AG04449 (cell line): ENCODE measurements at regions of chr1 and their contacts with region 1.

Region 1: GRCh38 chr1:61851849-61852669 is 109.8 kb downstream of the PATJ start:
- DNase-seq: peak; percentile 17
- H3K4me3 ChIP-seq: no peak overlapping the region
- CTCF ChIP-seq: peak; percentile 45

Region 2: DNA sequence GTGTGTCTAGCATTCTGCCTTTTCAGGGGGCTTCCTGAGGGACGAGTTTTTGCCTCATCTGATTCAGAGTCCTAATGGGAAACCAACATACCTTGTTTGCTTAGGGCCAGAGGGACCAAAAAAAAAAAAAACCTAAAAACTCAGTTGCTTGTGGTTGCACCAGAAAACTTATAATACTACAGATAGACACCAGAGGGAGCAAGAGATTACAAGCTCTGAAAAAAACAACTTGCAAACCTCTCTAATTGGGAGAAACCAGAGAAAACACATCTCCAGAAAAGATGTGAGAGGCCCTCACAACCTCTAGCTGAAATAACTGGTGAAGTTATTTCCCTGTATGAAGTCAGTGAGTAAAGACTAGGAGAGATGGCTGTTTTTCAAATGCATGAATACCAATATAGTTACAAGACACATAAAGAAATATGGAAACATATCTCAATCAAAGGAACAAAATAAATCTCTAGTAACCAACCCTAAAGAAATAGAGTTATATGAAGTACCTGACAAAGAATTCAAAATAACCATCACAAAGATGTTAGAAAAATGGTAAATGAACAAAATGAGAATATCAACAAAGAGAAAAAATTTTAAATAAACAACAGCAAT is 1003.4 kb before region 1 on chr1:
- CTCF ChIA-PET with region 1: interaction called, 18 read pairs
- POLR2A ChIA-PET with region 1: no interaction called
- DNase-seq: no peak
- H3K4me3 ChIP-seq: no peak overlapping the region
- CTCF ChIP-seq: peak; percentile 1

Region 3: DNA sequence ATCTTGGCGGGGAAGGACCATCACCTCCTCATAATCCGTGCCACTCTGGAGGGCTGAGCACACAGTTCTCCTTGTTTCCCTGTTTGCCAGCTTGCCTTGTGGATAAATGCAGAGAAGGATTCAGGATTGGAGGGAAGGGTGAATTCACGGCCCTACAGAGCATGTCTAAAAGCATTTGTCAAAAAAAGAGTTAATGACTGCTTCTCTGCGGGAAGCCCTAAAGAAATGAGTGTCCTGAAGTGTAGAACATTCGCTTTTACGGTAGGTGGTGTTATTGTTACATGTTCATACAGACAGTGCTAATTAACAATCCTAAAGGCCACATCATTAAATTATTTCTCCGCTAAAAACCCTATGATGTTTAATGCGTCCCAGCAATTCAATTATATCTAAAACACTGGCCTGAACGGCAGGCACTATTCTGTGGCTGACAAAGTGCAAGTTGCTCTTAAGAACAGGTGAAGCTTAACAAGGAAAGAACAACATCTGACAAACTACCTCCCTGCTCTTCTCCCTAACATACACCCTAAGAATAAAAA is 882.0 kb before region 1 on chr1:
- CTCF ChIA-PET with region 1: interaction called, 15 read pairs
- POLR2A ChIA-PET with region 1: no interaction called
- DNase-seq: no peak
- H3K4me3 ChIP-seq: no peak overlapping the region
- CTCF ChIP-seq: no peak

Region 4: DNA sequence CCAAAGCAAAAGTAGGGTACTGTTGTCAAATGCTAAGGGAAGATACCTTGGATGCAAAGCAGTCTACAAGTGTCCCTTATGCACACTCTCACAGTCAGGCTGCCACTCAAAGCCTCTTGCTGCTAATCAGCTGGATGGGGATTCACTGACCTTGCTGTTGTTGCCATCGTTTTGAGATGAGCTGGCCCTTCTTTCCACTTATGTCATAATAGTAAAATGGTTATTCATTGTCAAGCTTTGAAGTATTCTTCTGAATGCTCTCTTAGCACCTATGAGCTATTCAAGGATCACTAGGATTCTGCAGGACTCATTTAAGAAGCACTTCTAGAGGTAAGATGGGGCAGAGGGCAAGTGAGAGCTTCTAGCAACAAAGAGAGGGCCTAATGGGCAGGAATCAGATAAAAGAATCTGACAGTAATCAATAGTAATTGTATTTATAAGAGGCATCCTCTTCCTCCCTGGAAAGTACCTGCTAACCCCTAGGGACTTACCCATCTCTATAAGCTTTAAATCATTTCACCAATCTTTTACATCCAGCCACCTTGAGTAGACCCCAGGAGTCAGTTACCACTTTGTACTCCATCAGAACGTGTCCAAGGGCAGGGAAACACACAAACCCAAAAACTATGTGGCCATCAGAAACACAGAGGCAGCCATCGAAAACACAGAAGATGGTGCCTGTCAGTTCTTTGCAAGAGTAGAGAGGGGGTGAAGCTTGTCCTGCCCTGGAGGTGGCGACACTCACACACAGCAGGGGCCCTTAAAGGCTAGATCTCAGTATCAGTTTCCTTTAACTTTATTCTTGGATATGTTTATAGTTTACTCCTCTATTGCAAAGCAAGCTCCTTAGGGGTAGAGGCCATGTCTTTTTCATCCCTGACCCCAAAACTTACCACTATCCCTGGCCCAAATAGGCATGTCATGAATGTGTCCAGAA is 873.4 kb before region 1 on chr1:
- CTCF ChIA-PET with region 1: interaction called, 19 read pairs
- POLR2A ChIA-PET with region 1: no interaction called
- DNase-seq: no peak
- H3K4me3 ChIP-seq: no peak overlapping the region
- CTCF ChIP-seq: peak; percentile 76

Region 5: DNA sequence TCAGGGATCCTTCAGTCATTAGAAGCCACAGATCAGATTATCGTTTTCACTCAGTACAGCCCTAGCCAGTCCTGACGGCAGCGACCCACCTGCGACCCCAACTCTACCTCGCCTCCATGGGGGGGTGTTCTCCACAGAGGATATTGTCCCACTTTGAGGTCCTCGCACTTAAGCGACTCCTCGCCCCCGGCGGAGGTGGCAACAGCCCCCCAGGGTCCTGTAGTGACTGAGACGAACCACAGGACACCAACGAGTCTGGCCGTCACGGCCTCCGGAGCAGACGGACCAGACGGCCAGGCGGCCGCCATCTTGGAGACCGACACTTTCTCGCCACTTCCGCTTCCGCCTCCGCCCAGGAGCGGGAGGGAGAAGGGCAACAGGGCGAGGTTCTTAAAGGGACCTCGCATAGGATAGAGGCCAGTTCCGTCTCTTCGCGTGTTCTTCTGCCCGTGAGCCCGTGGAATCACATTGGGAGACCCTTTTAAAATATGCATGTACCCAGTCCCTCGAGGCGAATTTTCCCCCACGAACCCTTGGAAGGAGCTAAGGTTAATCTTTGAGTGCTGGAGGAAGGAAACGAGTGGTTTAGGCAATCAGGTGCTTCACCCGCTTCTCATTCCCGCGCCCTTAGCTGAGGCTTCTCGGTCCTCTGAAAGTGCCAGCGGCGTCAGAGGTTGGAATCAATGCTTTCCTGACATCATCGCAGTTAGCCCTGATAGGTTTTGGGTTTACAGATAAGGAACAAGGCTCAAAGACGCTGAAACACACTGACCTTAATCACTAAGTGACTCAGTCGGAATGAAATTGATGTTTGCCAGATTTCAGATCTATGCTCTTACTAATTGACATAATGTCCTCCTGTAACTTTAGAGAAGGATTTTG is 127.0 kb before region 1 on chr1 and contains the start of gene TM2D1:
- CTCF ChIA-PET with region 1: no interaction called
- POLR2A ChIA-PET with region 1: no interaction called
- DNase-seq: peak; percentile 28
- H3K4me3 ChIP-seq: peak within 1 kb of the TSS; percentile 100
- CTCF ChIP-seq: no peak